Common myeloid progenitor, CD34-positive (primary cell): ENCODE measurements at regions of chr10 and their contacts with region 1.

Region 1: GRCh38 chr10:58641708-58642107 is 129.0 kb downstream of the BICC1 start:
- DNase-seq: no peak
- H3K4me3 ChIP-seq: no peak overlapping the region
- H3K27ac ChIP-seq: no peak overlapping the region
- H3K4me1 ChIP-seq: peaks cover 2 to 17% (median 8%) of the 10 kb centered on the region in 4 experiments
- H3K27me3 ChIP-seq: no peaks in the 10 kb centered on the region

Region 2: DNA sequence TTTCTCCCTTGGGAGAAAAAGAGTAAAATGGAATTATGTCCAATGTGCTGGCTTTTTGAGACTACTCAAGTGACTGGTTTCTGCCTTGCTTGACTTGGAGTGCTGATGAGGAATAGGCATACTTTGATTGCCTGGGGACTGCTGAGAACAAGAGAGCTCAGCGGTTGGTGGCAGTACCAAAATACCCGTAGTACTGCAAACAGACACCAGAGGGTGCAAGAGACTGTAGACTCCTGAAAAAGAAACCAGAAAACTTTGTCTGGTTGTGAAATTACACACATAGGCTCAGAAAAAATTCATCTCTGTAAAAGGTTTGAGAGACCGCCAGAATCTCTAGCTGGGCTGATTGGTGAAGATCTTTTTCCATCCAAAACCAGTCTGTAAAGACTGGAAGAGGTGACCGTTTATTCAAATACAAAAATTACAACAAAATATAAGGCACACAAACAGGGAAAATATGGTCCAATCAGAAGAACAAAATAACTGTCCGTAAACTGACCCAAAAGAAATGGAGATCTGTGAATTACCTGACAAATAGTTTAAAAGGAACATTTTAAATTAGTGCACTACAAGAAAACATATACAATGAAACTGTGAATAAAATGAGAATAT is 110.5 kb before region 1 on chr10:
- CTCF ChIA-PET with region 1: interaction called, 11 read pairs
- POLR2A ChIA-PET with region 1: no interaction called
- DNase-seq: peak; percentile 51 to 82 (median 80)
- H3K4me3 ChIP-seq: no peak overlapping the region
- H3K27ac ChIP-seq: no peak overlapping the region
- H3K4me1 ChIP-seq: no peaks in the 10 kb centered on the region
- H3K27me3 ChIP-seq: no peaks in the 10 kb centered on the region